H1 (cell line): ENCODE measurements at regions of chr12 and their contacts with region 1.

Region 1: GRCh38 chr12:32139064-32139421 is 32.4 kb downstream of the BICD1 start:
- DNase-seq: no peak
- H3K4me3 ChIP-seq: peak overlapping the region; percentile 31 to 59 (median 40); a peak in 7 of 8 replicates
- H3K27ac ChIP-seq: peak overlapping the region; percentile 39; the same call in 1 of the 2 replicates
- H3K4me1 ChIP-seq: peaks cover 2 to 19% (median 11%) of the 10 kb centered on the region in 4 experiments; a peak in 5 of 7 replicates
- H3K27me3 ChIP-seq: no peaks in the 10 kb centered on the region
- CTCF ChIP-seq: no peak
- EP300 ChIP-seq: no peak
- POLR2A ChIP-seq: no peak
- RAD21 ChIP-seq: no peak

Region 2: DNA sequence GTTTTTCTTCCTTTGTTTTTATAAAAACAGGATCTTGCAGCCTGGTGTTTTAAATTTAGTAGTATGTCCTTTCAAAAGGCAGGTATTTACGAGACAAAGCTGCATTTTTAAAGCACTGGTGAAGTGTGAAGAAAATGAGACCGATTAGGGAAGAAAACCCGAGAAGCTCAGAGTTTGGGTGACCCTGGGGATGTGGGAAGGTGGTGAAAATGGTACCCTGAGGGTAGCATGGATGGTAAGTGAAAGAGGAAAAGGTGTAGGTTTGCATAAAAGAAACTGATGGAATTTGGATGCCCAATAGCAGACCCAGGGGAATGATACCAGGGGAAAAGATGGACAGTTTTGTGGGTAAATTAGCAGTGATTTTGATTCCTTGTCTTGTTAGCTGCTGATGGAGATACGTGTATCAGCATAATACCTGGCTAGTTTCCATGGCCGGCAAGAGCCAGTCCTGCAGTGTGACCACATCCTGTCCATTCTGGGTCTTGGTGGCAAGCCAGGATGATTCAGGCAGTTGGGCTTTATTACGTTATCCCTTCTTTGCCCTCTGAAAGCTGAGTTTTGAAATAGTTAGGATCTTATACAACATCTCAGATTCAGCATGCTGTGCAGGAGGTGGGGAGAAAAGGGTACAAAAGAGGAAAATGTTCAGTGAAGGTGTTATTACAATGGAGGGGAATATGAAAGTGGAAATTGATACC is 23.5 kb before region 1 on chr12:
- CTCF ChIA-PET with region 1: interaction called, 4 read pairs
- POLR2A ChIA-PET with region 1: interaction called, 10 read pairs
- DNase-seq: no peak
- H3K4me3 ChIP-seq: no peak overlapping the region
- H3K27ac ChIP-seq: no peak overlapping the region
- H3K4me1 ChIP-seq: peaks cover 6 to 17% (median 10%) of the 10 kb centered on the region in 4 experiments
- H3K27me3 ChIP-seq: no peaks in the 10 kb centered on the region
- CTCF ChIP-seq: no peak
- EP300 ChIP-seq: no peak
- POLR2A ChIP-seq: 0 out of 3 replicates have a peak, but pooled peaks of 1 of the 2 experiments have one; percentile 20
- RAD21 ChIP-seq: no peak

Region 3: DNA sequence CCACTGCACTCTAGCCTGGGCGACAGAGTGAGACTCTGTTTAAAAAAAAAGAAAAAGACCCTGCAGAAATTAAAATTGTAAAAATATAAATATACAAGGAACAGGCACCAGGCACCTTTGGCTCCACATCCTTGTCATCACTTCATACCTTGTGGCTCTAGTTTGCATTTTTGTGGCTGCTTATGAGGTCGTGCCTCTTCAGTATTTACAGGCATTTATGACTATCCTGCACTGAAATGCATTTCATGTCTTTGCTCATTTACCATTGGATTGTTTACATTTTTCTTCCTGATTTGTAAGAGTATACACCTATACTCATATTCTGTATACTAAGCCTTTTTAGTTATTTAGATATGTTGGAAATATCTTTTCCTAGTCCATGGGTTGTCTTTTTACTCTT is 12.3 kb before region 1 on chr12:
- CTCF ChIA-PET with region 1: interaction called, 8 read pairs
- POLR2A ChIA-PET with region 1: interaction called, 18 read pairs
- DNase-seq: no peak
- H3K4me3 ChIP-seq: no peak overlapping the region
- H3K27ac ChIP-seq: no peak overlapping the region
- H3K4me1 ChIP-seq: peaks cover 5 to 13% (median 6%) of the 10 kb centered on the region in 4 experiments; a peak in 4 of 7 replicates
- H3K27me3 ChIP-seq: no peaks in the 10 kb centered on the region
- CTCF ChIP-seq: no peak
- EP300 ChIP-seq: no peak
- POLR2A ChIP-seq: no peak
- RAD21 ChIP-seq: no peak

Region 4: DNA sequence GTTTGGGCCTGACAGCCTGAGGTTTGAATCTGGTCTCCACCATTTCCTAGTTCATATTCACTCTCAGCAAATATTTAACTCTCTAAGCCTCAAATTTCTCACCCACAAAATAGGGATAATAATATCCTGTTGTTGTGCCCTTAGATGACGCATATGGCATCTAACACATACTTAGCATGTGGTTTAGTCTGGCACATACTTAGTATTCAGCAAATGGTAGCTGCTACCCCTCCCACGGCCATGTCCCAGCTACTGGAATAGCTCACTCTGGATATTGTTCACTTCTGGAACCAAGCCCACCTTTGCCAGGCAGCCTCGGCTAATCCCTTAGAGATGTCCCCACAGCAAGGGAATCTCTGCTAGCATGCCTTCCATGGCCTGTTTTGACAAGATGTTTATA is 20.9 kb after region 1 on chr12:
- CTCF ChIA-PET with region 1: interaction called, 7 read pairs
- POLR2A ChIA-PET with region 1: interaction called, 18 read pairs
- DNase-seq: no peak
- H3K4me3 ChIP-seq: no peak overlapping the region
- H3K27ac ChIP-seq: no peak overlapping the region
- H3K4me1 ChIP-seq: peaks cover 0 to 9% (median 5%) of the 10 kb centered on the region in 4 experiments; a peak in 6 of 7 replicates
- H3K27me3 ChIP-seq: no peaks in the 10 kb centered on the region
- CTCF ChIP-seq: no peak
- EP300 ChIP-seq: no peak
- POLR2A ChIP-seq: no peak
- RAD21 ChIP-seq: no peak

Region 5: DNA sequence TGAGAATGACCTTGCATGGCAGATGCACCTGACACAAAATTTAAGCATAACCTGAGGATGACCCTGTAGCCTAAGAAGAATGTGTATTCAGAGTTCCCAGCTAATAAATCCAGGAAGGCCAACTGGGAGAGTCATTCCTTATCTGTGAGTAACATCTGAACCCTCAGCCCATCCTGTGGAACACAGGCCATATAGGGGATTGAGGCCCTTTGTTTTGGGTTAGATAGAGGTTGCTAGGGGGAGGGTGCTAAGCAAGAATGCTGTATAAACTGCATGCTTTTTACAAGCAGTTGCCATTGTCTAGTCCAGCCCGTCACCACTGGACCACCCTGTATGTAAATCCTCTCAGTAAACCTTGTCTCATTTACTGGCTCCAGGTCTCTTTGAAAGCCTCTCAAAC is 44.6 kb after region 1 on chr12:
- CTCF ChIA-PET with region 1: no interaction called
- POLR2A ChIA-PET with region 1: no interaction called
- DNase-seq: peak in 1 of 2 experiments; percentile 38
- H3K4me3 ChIP-seq: no peak overlapping the region
- H3K27ac ChIP-seq: no peak overlapping the region
- H3K4me1 ChIP-seq: peaks cover 0 to 4% (median under 1%) of the 10 kb centered on the region in 4 experiments; a peak in 3 of 7 replicates
- H3K27me3 ChIP-seq: no peaks in the 10 kb centered on the region
- CTCF ChIP-seq: no peak
- EP300 ChIP-seq: no peak
- POLR2A ChIP-seq: no peak
- RAD21 ChIP-seq: no peak